ENCODE measurements at regions of chr12 and their contacts with region 1.

Region 1: GRCh38 chr12:101584660-101585059 is 10.1 kb upstream of the MYBPC1 start:
- DNase-seq: no peak
- ATAC-seq: no peak

Region 2: DNA sequence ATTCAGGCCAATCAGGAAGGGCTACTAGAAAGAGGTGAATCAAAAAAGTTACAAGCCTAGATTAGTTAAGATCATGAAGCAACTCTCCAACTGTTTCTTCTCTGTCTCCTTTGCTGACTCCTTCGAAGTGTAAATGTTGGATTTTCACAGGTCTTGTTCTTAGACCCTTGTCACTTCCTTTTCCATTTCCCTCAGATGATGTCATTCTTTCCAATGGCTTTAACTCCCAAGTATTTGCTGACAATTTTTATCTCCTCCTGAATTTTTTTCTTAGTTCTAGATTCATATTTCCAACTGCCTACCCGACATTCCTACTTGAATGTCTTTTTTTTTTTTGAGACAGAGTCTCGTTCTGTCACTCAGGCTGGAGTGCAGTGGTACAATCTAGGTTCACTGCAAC is 1000.4 kb before region 1 on chr12:
- intact Hi-C with region 1: no loop called
- DNase-seq: no peak
- ATAC-seq: no peak

Region 3: DNA sequence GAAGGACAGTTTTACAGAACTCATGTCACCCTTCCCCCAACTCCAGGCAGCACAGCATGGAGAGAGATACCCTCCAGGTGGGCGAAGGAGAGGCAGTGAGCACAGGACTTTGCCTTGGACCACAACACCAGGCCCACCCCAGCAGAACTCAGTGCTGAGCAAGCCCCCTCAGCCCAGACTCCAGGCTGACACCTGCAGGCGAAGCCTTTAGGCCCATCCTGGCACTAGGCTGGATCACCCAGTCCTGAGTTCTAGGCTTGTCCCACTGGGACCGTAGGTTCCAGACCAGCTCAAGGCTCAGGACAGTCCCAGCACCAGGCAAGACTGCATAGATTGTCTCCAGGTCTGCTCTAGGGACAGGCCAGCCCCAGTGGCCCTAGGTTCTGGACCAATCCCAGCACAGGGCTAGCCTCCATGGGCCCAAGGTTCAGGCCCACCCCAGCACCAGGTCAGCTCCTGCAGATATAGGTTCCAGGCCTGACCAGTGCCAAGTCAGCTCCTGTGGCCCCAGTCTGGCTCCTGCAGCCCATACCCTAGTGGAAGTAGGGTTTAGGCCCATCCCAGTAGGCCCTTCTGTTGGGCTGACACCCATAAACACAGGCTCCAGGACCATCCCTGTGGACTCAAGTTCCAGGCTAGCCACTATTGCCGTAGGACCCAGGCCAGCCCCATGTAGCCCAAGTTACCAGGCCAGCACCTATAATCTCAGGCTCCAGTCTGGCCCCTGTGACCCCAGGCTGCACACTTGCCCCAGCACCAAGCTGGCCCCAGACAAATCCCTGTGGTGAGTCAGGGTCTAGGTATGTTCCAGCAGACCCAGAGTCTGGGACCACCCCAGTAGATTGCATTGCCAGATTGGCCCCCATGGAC is 467.8 kb after region 1 on chr12:
- intact Hi-C with region 1: loop called (anchors 5 kb)
- DNase-seq: no peak
- ATAC-seq: peak; percentile 28